ENCODE measurements at regions of chr6 and their contacts with region 1.

Region 1: GRCh38 chr6:26234421-26235296 is 130.3 kb upstream of the BTN3A2 start:
- DNase-seq: peak; percentile 79
- H3K4me3 Mint-ChIP-seq: peak overlapping the region; percentile 66
- H3K27ac Mint-ChIP-seq: peak overlapping the region; percentile 81
- H3K4me1 Mint-ChIP-seq: peaks cover 31% of the 10 kb centered on the region
- H3K27me3 Mint-ChIP-seq: no peaks in the 10 kb centered on the region
- CTCF ChIP-seq: no peak

Region 2: DNA sequence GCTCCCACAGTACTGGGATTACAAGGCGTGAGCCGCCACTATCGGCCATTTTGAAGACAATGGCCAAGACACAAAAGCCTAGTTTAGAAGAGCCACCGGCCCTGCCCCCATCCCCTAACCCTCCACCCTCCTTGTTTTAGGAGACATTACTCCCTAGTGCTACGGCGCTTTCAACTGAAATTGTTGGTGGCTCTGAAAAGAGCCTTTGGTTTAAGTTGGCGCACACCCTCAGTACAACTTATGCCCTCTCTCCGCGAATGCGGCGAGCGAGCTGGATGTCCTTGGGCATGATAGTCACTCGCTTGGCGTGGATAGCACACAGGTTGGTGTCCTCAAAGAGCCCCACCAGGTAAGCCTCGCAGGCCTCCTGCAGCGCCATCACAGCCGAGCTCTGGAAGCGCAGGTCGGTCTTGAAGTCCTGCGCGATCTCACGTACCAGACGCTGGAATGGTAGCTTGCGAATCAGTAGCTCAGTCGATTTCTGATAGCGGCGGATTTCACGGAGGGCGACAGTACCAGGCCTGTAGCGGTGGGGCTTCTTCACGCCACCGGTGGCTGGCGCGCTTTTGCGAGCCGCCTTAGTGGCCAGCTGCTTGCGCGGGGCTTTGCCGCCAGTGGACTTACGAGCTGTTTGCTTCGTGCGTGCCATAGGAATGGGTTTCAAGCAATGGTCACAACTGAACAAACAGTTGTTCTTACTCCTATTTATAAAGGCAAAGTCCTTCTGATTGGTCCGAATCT is 15.5 kb after region 1 on chr6:
- CTCF ChIA-PET with region 1: interaction called, 25 read pairs
- intact Hi-C with region 1: loop called (anchors 1 kb)
- DNase-seq: peak; percentile 81
- H3K4me3 Mint-ChIP-seq: peak overlapping the region; percentile 92
- H3K27ac Mint-ChIP-seq: peak overlapping the region; percentile 93
- H3K4me1 Mint-ChIP-seq: peaks cover 18% of the 10 kb centered on the region
- H3K27me3 Mint-ChIP-seq: no peaks in the 10 kb centered on the region
- CTCF ChIP-seq: peak; percentile 35